ENCODE measurements at regions of chr1 and their contacts with region 1.

Region 1: DNA sequence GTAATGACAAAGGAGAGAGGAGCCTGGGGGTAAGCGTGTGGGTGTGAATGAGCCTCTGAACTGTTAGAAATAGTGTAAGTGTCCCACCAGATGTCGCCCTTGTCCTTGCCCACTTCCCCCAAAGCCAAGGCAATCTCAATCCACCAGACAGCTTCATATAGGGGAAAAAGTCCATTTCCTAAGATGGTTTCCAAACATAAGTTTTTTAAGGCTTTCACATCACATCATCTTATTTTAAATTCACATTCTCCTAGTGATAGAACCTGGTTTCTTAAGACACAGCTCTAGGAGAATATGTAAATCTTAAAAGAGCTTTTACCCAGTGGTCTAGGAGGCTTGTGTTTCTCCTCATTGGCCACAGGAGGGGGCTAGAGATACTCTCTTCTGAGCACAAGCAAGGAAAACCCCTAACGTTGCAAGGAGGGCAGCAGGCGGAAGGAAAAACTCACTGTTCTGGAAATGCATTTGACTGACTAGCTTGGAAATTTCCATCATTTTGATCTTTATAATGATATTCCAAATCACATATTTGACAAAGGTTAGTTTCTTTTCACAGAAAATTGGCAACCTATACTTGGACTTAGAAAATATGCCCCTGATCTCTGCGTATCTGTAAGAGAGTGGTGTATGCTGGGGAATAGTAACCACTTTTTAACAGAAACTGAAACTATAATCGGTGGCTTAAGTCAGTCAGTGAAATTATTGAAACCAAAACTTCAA is 51.9 kb upstream of the LPAR3 start:
- DNase-seq: peak; percentile 47
- ATAC-seq: peak; percentile 92
- H3K4me3 Mint-ChIP-seq: peak overlapping the region; percentile 84
- H3K27ac Mint-ChIP-seq: peak overlapping the region; percentile 82
- H3K4me1 Mint-ChIP-seq: peaks cover 11% of the 10 kb centered on the region
- H3K27me3 Mint-ChIP-seq: no peaks in the 10 kb centered on the region

Region 2: DNA sequence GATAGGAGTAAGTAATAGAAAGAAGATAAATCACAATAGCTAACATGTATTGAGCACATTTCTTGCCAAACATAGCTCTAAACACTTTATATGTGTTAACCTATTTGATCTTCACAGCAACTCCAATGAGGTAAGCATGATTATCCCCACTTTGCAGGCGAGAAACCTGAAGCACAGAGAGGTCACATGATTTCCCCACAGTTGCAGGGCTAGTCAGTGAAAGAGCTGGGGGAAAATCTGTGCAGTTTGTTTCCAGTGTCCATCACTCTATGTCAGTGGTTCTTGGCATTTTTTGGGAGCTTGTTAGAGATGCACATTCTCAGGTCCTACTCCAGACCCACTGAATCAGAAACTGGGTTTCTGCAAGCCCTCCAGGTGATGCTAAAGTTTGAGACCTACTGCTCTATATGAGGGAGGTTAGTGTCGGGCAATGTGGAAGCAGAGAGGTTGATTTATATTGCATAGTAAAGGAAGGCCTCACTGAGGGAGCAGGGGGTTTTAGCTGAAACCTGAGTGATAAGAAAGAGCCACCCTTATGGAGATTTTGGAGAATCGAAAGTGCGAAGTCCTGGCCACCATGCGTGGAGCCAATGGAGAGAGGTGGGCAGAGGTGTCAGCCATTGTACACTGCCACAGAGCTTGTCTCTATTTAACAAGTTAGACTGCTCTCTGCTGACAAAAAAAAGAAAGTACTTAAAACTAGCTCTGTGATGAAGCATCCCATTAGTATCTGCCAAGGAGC is 82.5 kb after region 1 on chr1:
- POLR2A ChIA-PET with region 1: interaction called, 11 read pairs
- DNase-seq: no peak
- ATAC-seq: peak; percentile 82
- H3K4me3 Mint-ChIP-seq: peak overlapping the region; percentile 51
- H3K27ac Mint-ChIP-seq: peak overlapping the region; percentile 80
- H3K4me1 Mint-ChIP-seq: peaks cover 9% of the 10 kb centered on the region
- H3K27me3 Mint-ChIP-seq: no peaks in the 10 kb centered on the region

Region 3: DNA sequence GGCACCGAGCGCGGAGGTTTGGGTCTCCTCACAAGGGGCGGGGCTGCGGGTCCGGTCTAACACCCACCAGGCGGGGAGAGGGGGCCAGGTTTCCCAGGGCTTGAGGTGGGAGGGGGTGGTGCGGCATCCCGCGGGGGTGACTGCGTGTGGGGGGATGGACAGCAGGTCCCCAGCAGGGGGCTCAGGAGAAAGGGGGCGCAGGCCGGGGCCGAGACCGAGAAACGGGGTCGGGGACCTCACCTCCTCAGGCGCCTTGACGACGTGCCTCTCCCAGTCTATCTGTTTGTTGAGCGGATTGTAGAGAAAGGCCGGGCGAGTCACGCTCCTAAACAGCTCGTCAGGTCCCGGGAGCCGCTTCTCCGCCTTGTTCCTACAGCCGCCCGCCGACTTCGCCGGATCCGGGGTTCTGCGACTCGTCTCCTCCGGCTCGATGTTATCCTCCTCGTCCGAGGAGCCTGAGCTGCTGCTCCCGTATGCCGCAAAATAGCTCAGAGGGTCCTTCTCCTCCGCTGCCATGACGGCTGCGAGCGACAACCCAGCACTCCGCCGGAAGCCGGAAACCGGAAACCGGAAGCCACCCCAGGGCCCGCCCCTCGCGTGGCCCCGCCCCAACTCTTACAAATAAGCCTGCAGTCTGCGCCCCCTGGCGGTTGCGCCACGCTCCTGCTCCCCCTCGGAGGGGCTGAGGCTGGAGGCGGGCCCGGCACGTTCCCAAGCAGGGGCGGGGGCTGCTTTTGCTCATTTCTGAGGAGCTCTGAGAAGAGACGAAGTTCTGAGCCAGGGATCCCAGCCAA is 314.4 kb after region 1 on chr1 and contains the start of gene C1orf52:
- POLR2A ChIA-PET with region 1: interaction called, 28 read pairs
- DNase-seq: peak; percentile 98
- ATAC-seq: peak; percentile 91
- H3K4me3 Mint-ChIP-seq: peak within 1 kb of the TSS; percentile 97
- H3K27ac Mint-ChIP-seq: peak within 1 kb of the TSS; percentile 98
- H3K4me1 Mint-ChIP-seq: peaks cover 25% of the 10 kb centered on the region
- H3K27me3 Mint-ChIP-seq: no peaks in the 10 kb centered on the region
- total RNA-seq, gene C1orf52: 31.2 to 35.7 TPM

Measured in activated naive CD8-positive, alpha-beta T cell treated with anti-CD3 and anti-CD28 coated beads, Interleukin-2, amount 10 ng/mL, durations not matched to agents 7 days and 5 days (primary cell).